SK-N-SH (cell line): ENCODE measurements at regions of chr4 and their contacts with region 1.

Region 1: GRCh38 chr4:1249148-1249730 is 309 bp upstream of the CTBP1 start:
- DNase-seq: peak; percentile 95
- H3K4me3 ChIP-seq: peak overlapping the region; percentile 67 to 73
- H3K27ac ChIP-seq: peak overlapping the region; percentile 76 to 95
- H3K4me1 ChIP-seq: peaks cover 10 to 33% of the 10 kb centered on the region in 2 experiments; a peak in 3 of 4 replicates
- H3K27me3 ChIP-seq: no peaks in the 10 kb centered on the region
- CTCF ChIP-seq: no peak
- EP300 ChIP-seq: no peak
- RAD21 ChIP-seq: no peak

Region 2: GRCh38 chr4:1233641-1234308 is 15.5 kb before region 1 on chr4:
- CTCF ChIA-PET with region 1: interaction called, 14 read pairs
- POLR2A ChIA-PET with region 1: interaction called, 6 read pairs
- DNase-seq: peak; percentile 81
- H3K4me3 ChIP-seq: no peak overlapping the region
- H3K27ac ChIP-seq: peak overlapping the region in 1 of 2 experiments; percentile 66; a peak in 2 of 4 replicates
- H3K4me1 ChIP-seq: peaks cover 0 to 30% of the 10 kb centered on the region in 2 experiments; a peak in 1 of 4 replicates
- H3K27me3 ChIP-seq: no peaks in the 10 kb centered on the region
- CTCF ChIP-seq: peak; percentile 16; the same call in 1 of the 2 replicates
- EP300 ChIP-seq: no peak
- RAD21 ChIP-seq: peak; percentile 57

Region 3: GRCh38 chr4:1346781-1347409 is 97.7 kb after region 1 on chr4 and contains the start of gene UVSSA:
- CTCF ChIA-PET with region 1: interaction called, 4 read pairs
- POLR2A ChIA-PET with region 1: interaction called, 15 read pairs
- DNase-seq: peak; percentile 99
- H3K4me3 ChIP-seq: peak within 1 kb of the TSS; percentile 77 to 97
- H3K27ac ChIP-seq: peak within 1 kb of the TSS; percentile 89
- H3K4me1 ChIP-seq: peaks cover 0 to 20% of the 10 kb centered on the region in 2 experiments; a peak in 1 of 4 replicates
- H3K27me3 ChIP-seq: no peaks in the 10 kb centered on the region
- CTCF ChIP-seq: no peak
- EP300 ChIP-seq: no peak
- RAD21 ChIP-seq: no peak
- polyA plus RNA-seq, gene UVSSA: 14.5 and 14.9 TPM in 2 replicates